Posterior vena cava (tissue), 2 donors: ENCODE measurements at regions of chr18 and their contacts with region 1.

Region 1: DNA sequence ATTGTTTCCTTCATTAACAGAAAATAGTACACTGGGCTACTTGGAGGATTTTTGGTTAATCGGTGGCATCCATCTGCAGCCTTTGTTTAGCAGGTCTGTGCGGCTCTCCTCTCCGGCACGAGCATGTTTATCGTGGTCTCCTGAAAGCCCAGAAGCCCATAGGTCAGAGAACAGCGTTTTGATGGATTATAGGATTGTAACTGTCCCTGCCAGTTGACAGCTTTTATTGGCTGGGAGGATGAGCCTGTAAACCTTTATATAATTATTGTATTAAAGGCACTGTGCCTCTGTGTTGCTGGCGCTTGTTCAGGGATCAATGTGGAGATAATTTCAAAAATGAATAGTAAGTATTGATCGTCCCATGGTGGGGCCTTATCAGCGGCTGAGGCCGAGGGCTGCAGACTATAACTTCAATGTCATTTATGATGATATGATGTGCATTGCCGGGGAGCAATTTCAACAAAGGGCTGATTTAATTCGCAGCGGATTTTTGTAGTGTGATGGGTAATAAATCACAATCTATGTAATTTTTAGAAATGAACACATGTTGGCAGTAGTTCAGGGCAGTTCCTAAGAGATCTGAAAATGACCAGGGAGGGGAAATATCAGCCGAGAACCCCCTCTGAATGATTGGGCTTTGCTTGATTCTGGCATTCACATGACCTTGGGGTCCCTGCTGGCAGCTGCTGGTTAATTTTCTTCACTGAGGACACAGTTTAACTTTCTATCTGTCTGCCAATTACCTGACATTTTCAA is 736.1 kb downstream of the GALR1 start:
- DNase-seq: no peak

Region 2: GRCh38 chr18:78352910-78353309 is 367.2 kb after region 1 on chr18:
- intact Hi-C with region 1: loop called in 1 of 2 experiments (anchors 5 kb)
- DNase-seq: no peak